ENCODE measurements at regions of chr4 and their contacts with region 1.

Region 1: GRCh38 chr4:140252742-140253555 is 99.0 kb upstream of the MAML3 start:
- DNase-seq: peak; percentile 78 to 89 (median 85)
- H3K4me3 ChIP-seq: peak overlapping the region; percentile 60
- H3K27ac ChIP-seq: peak overlapping the region; percentile 94 to 95
- H3K4me1 ChIP-seq: peaks cover 5% of the 10 kb centered on the region
- H3K27me3 ChIP-seq: no peaks in the 10 kb centered on the region
- CTCF ChIP-seq: peak; percentile 78 to 85 (median 84)
- EP300 ChIP-seq: no peak
- POLR2A ChIP-seq: no peak

Region 2: GRCh38 chr4:139665690-139666529 is 587.0 kb before region 1 on chr4 and contains the start of gene MGST2:
- intact Hi-C with region 1: loop called in 1 of 4 experiments (anchors 10 kb)
- DNase-seq: peak; percentile 57 to 81 (median 73)
- H3K4me3 ChIP-seq: peak within 1 kb of the TSS; percentile 38
- H3K27ac ChIP-seq: peak within 1 kb of the TSS; percentile 59 to 66
- H3K4me1 ChIP-seq: peaks cover 2% of the 10 kb centered on the region
- H3K27me3 ChIP-seq: no peaks in the 10 kb centered on the region
- CTCF ChIP-seq: no peak
- EP300 ChIP-seq: no peak
- POLR2A ChIP-seq: peak; percentile 11
- total RNA-seq, gene MGST2: 14.5 to 64.9 (median 28.1) TPM

Region 3: GRCh38 chr4:139815778-139816601 is 437.0 kb before region 1 on chr4:
- intact Hi-C with region 1: no loop called
- DNase-seq: peak; percentile 64 to 80 (median 72)
- H3K4me3 ChIP-seq: peak overlapping the region; percentile 27
- H3K27ac ChIP-seq: peak overlapping the region; percentile 48 to 83
- H3K4me1 ChIP-seq: peaks cover 12% of the 10 kb centered on the region
- H3K27me3 ChIP-seq: no peaks in the 10 kb centered on the region
- CTCF ChIP-seq: no peak
- EP300 ChIP-seq: no peak
- POLR2A ChIP-seq: peak; percentile 35

Region 4: GRCh38 chr4:139872274-139872673 is 380.7 kb before region 1 on chr4:
- intact Hi-C with region 1: no loop called
- DNase-seq: no peak
- H3K4me3 ChIP-seq: no peak overlapping the region
- H3K27ac ChIP-seq: no peak overlapping the region
- H3K4me1 ChIP-seq: peaks cover 7% of the 10 kb centered on the region
- H3K27me3 ChIP-seq: no peaks in the 10 kb centered on the region
- CTCF ChIP-seq: no peak
- EP300 ChIP-seq: no peak
- POLR2A ChIP-seq: no peak

Region 5: DNA sequence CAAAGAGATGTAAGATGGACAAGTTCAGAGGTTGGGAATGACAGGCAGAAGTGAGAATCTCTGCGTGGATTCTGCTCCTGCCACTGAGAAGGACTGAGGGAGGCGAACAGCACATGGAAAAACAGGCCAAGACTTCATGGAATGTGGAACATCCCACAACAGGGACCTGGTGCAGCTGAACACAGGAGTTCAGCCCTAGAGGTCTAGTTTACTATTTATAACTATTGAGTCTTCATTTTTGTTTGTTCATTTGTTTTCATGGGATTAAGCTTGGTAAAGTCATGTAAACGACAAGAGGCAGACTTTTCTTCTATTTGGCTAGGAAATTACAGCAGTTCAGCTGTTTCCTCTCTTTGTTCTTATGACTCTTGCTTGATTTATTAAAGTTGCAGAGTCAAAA is 333.4 kb before region 1 on chr4:
- intact Hi-C with region 1: loop called in 1 of 4 experiments (anchors 10 kb)
- DNase-seq: no peak
- H3K4me3 ChIP-seq: no peak overlapping the region
- H3K27ac ChIP-seq: peak overlapping the region; percentile 23 to 83
- H3K4me1 ChIP-seq: peaks cover 34% of the 10 kb centered on the region
- H3K27me3 ChIP-seq: no peaks in the 10 kb centered on the region
- CTCF ChIP-seq: no peak
- EP300 ChIP-seq: no peak
- POLR2A ChIP-seq: no peak

Region 6: GRCh38 chr4:139958739-139959098 is 294.2 kb before region 1 on chr4:
- intact Hi-C with region 1: no loop called
- DNase-seq: no peak
- H3K4me3 ChIP-seq: no peak overlapping the region
- H3K27ac ChIP-seq: no peak overlapping the region
- H3K4me1 ChIP-seq: peaks cover 14% of the 10 kb centered on the region
- H3K27me3 ChIP-seq: no peaks in the 10 kb centered on the region
- CTCF ChIP-seq: no peak
- EP300 ChIP-seq: no peak
- POLR2A ChIP-seq: no peak

Region 7: DNA sequence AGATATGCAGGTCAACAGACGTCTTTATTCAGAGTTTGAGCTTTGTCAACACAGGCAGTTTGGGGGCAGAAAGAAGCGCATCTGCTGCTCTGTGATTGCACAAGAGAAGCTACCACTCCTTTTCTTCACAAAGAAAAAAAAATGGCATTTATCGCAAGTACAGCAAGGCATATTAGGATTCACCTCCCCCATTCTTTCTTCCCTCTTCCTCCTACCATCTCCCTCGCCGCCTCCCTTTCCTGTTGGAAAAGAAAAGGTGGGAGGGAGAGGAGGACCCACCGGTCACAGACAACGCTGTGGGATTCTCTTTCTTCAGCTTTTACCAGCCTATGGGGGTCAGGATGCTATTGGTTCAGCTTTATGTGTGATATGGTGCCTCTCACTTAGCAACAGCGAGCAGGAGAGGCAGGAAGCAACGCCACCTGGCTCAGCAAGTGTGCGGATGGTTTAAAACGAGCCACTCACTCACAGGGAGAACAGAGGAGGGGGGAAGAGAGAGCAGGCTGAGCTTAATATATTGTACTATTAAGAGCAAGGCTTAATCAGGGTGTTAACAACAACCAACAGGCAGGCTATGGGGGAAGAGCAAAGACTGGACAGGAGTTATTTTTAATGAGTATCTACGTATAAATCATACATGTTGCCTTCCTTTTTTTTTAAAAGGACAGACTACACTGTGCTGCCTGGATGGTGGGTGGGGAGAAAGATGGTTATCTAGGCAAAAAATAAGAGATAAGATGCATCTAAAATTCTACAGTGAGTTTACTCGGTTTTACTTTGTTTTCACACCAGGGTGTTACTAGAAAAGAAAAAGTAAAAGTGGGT is 203.7 kb before region 1 on chr4:
- intact Hi-C with region 1: loop called in 2 of 4 experiments (anchors 5 to 10 kb)
- DNase-seq: peak; percentile 68 to 78 (median 68)
- H3K4me3 ChIP-seq: peak overlapping the region; percentile 17
- H3K27ac ChIP-seq: peak overlapping the region; percentile 62 to 85
- H3K4me1 ChIP-seq: peaks cover 5% of the 10 kb centered on the region
- H3K27me3 ChIP-seq: no peaks in the 10 kb centered on the region
- CTCF ChIP-seq: no peak
- EP300 ChIP-seq: no peak
- POLR2A ChIP-seq: no peak

Region 8: DNA sequence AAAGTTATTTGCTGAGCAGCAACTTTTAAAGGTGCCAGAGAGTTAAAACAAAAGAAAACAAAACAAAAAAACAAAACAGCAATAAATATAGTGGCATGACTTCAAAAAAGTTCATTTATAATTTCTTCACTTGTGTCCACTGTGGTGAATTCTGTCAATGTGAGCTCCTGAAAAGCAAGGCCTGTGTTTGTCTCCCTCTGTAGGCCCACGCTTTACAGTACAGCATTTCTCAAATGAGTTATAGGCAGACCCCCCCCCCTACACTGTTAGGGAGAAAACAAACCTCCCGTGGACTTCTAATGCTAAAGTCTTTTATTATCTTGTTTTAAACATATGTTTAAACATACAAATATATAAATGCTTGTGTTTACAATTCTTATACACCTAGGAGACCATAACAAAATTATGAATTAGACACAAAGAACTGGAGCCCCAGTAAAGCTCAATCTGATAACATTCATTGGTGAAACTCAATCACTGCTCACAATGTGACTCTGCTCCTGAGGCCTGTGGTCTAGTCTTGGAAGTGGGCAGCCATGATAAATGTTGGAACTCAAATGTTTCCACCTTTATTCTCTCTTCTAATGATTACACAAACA is 73.5 kb after region 1 on chr4:
- intact Hi-C with region 1: loop called in 1 of 4 experiments (anchors 5 kb)
- DNase-seq: peak in 3 of 5 donors; percentile 19 to 49 (median 25)
- H3K4me3 ChIP-seq: no peak overlapping the region
- H3K27ac ChIP-seq: no peak overlapping the region
- H3K4me1 ChIP-seq: no peaks in the 10 kb centered on the region
- H3K27me3 ChIP-seq: no peaks in the 10 kb centered on the region
- CTCF ChIP-seq: peak; percentile 35 to 70 (median 69)
- EP300 ChIP-seq: no peak
- POLR2A ChIP-seq: no peak